ENCODE measurements at regions of chr2 and their contacts with region 1.

Region 1: GRCh38 chr2:111897924-111898702 is at the start of gene MERTK:
- DNase-seq: peak; percentile 88 to 96 (median 95)
- ATAC-seq: peak; percentile 95 to 97
- H3K4me3 ChIP-seq: peak within 1 kb of the TSS; percentile 76
- H3K27ac ChIP-seq: peak within 1 kb of the TSS; percentile 71
- H3K4me1 ChIP-seq: no peaks in the 10 kb centered on the region
- H3K27me3 ChIP-seq: no peaks in the 10 kb centered on the region
- total RNA-seq, gene MERTK: 7.3 to 11.4 (median 10.0) TPM

Region 2: DNA sequence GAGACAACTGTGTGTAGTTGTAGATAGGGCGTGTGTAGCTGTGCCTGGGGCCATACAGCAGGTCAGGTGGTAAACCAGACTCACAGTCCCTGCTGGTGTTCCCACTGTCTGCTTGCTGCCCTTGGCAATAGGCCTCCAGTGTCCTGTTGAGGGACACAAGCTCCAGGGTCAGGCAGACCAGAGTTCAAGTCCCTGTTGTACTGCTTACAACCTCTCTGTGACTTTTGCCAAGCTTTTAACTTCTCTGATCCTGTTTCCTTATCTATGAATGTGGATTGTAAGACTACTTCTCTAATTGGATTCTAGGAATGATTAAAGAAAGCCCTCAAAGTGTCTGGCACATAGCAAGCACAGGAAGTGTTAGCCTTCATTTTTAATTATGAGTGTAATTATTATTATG is 68.9 kb after region 1 on chr2:
- intact Hi-C with region 1: loop called in 2 of 4 experiments (anchors 10 kb)
- DNase-seq: no peak
- ATAC-seq: peak in 1 of 2 donors; percentile 16
- H3K4me3 ChIP-seq: no peak overlapping the region
- H3K27ac ChIP-seq: no peak overlapping the region
- H3K4me1 ChIP-seq: peaks cover 4% of the 10 kb centered on the region
- H3K27me3 ChIP-seq: no peaks in the 10 kb centered on the region

Region 3: DNA sequence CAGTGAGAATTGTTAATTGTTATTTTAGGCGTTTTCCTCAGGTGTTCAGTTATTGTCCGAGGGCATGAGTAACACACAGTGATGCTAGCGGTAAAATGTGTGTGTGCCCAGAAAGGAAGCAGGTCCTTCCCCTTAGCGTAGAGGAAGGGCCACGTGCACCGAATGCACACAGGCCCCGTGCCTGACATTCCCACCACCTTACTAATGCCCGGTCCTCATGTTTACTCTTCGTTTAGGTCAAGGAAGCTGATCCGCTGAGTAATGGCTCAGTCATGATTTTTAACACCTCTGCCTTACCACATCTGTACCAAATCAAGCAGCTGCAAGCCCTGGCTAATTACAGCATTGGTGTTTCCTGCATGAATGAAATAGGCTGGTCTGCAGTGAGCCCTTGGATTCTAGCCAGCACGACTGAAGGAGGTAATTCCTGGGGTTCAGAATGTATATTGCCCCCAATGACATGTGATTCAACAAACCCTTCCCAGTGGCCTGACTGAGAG is 77.0 kb after region 1 on chr2:
- intact Hi-C with region 1: loop called in 1 of 4 experiments (anchors 10 kb)
- DNase-seq: no peak
- ATAC-seq: no peak
- H3K4me3 ChIP-seq: no peak overlapping the region
- H3K27ac ChIP-seq: no peak overlapping the region
- H3K4me1 ChIP-seq: peaks cover 5% of the 10 kb centered on the region
- H3K27me3 ChIP-seq: no peaks in the 10 kb centered on the region

Region 4: DNA sequence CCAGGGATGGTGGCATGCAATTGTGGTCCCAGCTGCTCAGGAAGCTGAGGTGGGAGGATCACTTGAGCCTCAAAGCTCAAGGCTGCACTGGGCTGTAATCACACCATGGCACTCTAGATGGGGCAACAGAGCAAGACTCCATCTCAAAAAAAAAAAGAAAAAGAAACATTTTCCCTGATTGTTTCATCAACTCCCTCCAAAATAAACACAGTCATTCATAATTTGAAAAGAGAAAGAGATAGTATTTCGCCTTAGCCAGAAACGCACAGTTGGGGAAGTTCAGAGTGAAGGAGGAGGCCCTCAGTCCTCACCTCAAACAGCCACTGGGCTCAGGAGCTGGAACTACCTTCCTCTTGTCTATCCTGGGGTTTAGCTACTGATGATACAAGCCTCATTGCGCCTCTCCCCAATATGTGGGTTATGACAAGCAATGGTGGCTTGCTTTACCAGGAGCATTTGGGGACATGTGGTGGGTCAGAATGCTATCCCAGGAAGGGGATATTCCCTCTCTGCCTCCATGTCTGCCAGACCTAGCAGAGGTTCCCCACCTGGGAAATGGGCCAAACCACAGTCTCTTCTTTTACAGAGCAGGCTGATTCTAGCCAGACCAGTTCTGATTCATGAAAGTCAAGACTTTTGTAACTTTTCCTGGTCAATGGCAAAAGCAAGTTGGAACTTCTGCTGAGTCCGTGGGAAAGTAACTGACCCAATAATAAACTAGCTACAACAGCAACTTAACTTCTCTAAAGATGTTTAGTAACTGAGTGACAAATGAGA is 134.8 kb after region 1 on chr2:
- intact Hi-C with region 1: loop called in 1 of 4 experiments (anchors 5 kb)
- DNase-seq: no peak
- ATAC-seq: peak; percentile 77 to 80
- H3K4me3 ChIP-seq: no peak overlapping the region
- H3K27ac ChIP-seq: peak overlapping the region; percentile 1
- H3K4me1 ChIP-seq: peaks cover 5% of the 10 kb centered on the region
- H3K27me3 ChIP-seq: no peaks in the 10 kb centered on the region

Region 5: GRCh38 chr2:112048887-112049286 is 150.8 kb after region 1 on chr2:
- intact Hi-C with region 1: loop called in 3 of 4 experiments (anchors 5 kb)
- DNase-seq: no peak
- ATAC-seq: peak; percentile 66 to 72
- H3K4me3 ChIP-seq: no peak overlapping the region
- H3K27ac ChIP-seq: no peak overlapping the region
- H3K4me1 ChIP-seq: no peaks in the 10 kb centered on the region
- H3K27me3 ChIP-seq: no peaks in the 10 kb centered on the region

Measured in right cardiac atrium (tissue), 5 donors.